Upper lobe of right lung (tissue), 1 donor: ENCODE measurements at regions of chr17 and their contacts with region 1.

Region 1: DNA sequence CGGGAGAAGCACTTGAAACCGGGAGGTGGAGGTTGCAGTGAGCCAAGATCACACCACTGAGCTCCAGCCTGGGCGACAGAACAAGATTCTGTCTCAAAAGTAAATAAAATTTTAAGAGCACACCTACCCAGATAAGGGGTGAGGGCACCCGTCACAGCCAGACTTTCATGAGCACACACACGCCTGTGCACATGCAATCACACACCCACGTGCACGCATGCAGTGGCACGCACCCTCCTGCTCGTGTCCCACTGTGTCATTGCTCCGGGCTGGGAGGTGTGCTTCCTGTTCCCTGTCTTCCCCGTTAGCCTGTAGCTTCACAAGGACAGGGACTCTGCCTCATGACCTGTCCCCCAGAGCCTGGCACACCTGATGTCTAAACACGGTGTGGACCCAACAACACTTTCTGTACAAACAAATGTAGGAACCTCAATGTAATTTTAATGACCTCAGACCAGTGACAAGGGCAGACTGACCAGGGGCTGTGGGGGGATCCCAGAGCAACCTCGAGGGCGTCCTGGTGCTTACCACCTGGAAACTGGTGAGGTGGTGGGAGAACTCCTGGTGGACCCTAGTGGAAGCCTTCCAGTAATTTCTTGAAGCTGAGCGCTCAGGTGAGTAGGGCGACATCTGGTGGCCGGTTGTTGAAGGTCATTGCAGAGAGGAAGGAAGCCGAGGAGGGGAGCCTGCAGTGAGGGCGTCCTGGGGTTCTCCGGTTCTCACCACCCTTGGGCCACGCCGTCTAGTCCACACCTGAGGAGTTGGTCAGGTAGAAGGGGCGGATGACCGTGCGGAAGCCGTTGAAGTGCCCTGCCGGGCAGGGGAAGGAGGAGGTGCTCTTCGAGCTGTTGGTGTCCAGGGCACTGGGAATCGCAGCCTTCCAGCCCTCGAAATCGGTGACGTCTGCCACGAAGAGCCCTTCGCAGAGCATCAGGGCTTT is 8.6 kb downstream of the LGALS3BP start:
- DNase-seq: peak; percentile 85
- ATAC-seq: peak; percentile 71
- H3K4me3 ChIP-seq: no peak overlapping the region
- H3K27ac ChIP-seq: no peak overlapping the region
- H3K4me1 ChIP-seq: peaks cover 12% of the 10 kb centered on the region
- H3K27me3 ChIP-seq: no peaks in the 10 kb centered on the region
- CTCF ChIP-seq: peak; percentile 90

Region 2: GRCh38 chr17:78774956-78775571 is 196.0 kb before region 1 on chr17:
- intact Hi-C with region 1: no loop called
- DNase-seq: no peak
- ATAC-seq: peak; percentile 59
- H3K4me3 ChIP-seq: peak overlapping the region; percentile 31
- H3K27ac ChIP-seq: peak overlapping the region; percentile 76
- H3K4me1 ChIP-seq: peaks cover 43% of the 10 kb centered on the region
- H3K27me3 ChIP-seq: no peaks in the 10 kb centered on the region
- CTCF ChIP-seq: no peak

Region 3: GRCh38 chr17:78862073-78863023 is 108.8 kb before region 1 on chr17:
- intact Hi-C with region 1: loop called (anchors 5 kb)
- DNase-seq: peak; percentile 83
- ATAC-seq: peak; percentile 92
- H3K4me3 ChIP-seq: no peak overlapping the region
- H3K27ac ChIP-seq: peak overlapping the region; percentile 65
- H3K4me1 ChIP-seq: peaks cover 13% of the 10 kb centered on the region
- H3K27me3 ChIP-seq: no peaks in the 10 kb centered on the region
- CTCF ChIP-seq: no peak

Region 4: DNA sequence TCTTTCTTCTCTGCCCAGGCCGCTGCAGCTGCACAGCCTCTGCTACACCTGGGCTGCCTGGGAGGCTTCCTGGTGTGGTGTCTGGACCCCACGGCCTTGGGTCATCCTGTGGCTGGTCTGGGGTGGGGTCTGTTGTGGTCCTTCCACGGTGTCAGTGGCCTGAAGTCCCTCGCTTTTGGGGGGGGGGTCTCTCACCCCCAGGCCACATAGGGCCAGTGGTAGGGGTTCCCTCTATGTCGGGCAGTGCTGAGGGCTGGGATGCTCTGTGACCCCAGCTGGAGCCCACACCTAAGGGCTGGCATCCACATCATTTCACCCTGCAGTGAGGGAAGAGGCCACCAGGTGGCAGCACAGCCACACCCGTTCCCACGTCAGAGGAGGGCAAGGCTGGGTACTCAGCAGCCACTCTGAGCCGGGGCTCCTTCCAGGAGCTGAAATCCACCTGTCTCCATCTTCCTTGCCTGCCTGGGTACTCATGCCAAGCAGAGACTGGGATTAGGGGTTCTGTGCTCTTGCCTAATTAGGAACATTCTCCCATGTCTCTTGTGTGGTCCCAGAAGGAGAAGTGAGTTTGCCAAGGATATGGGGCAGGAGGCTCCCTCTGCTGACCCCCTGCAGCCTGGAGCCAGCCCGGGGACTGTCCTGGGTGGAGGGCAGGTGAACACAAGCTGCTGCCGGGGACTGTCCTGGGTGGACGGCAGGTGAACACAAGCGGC is 116.5 kb after region 1 on chr17:
- intact Hi-C with region 1: no loop called
- DNase-seq: peak; percentile 84
- ATAC-seq: peak; percentile 83
- H3K4me3 ChIP-seq: no peak overlapping the region
- H3K27ac ChIP-seq: no peak overlapping the region
- H3K4me1 ChIP-seq: no peaks in the 10 kb centered on the region
- H3K27me3 ChIP-seq: peaks cover 18% of the 10 kb centered on the region
- CTCF ChIP-seq: peak; percentile 94